GM10248 (cell line): ENCODE measurements at regions of chr6 and their contacts with region 1.

Region 1: GRCh38 chr6:70221025-70221714 is 81.7 kb downstream of the COL9A1 start:
- DNase-seq: peak; percentile 43
- CTCF ChIP-seq: peak; percentile 52

Region 2: DNA sequence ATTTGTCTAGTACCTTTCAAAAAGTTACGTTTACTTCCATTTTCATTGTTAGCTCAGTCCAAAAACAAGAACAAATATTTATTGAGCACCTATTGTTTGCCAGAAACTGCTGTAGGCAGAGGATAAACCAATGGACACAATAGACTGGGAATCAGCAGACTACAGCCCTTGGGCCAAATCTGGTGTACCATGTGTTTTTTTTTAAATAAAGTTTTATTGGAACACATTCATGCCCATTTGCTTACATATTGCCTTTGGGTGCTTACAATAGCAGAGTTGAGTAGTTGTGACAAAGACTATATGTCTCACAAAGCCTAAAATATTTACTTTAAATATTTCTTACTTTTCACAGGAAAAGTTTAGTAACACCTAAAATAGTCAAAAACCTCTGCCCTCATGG is 134.4 kb before region 1 on chr6:
- CTCF ChIA-PET with region 1: no interaction called
- POLR2A ChIA-PET with region 1: no interaction called
- DNase-seq: no peak
- CTCF ChIP-seq: no peak

Region 3: GRCh38 chr6:70210462-70210861 is 10.7 kb before region 1 on chr6:
- CTCF ChIA-PET with region 1: interaction called, 40 read pairs
- POLR2A ChIA-PET with region 1: no interaction called
- DNase-seq: peak; percentile 14
- CTCF ChIP-seq: peak; percentile 22

Region 4: DNA sequence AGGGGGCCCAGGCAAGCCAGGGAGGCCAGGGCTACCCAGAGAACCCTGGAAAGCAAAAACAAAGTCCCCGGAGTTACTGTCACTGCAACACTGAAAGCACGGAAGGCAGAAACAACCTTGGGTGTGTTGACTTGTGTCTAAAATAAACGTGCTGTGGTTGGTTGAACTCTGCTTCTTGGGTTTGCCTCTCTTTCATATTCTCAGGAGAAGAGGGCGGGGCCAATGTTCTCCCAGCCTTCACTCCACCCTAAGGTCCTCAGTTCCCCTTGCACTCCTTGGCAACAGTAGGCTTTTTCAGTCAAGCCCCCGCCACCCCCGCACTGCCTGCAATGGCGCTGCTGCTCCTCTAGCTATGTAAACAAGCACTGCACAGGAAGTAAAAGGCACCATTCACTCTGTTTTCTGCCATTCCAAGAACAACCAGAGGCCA is 20.8 kb after region 1 on chr6:
- CTCF ChIA-PET with region 1: interaction called, 16 read pairs
- POLR2A ChIA-PET with region 1: no interaction called
- DNase-seq: no peak
- CTCF ChIP-seq: no peak

Region 5: GRCh38 chr6:70282312-70282918 is 61.2 kb after region 1 on chr6:
- CTCF ChIA-PET with region 1: no interaction called
- POLR2A ChIA-PET with region 1: no interaction called
- DNase-seq: peak; percentile 9
- CTCF ChIP-seq: no peak

Region 6: DNA sequence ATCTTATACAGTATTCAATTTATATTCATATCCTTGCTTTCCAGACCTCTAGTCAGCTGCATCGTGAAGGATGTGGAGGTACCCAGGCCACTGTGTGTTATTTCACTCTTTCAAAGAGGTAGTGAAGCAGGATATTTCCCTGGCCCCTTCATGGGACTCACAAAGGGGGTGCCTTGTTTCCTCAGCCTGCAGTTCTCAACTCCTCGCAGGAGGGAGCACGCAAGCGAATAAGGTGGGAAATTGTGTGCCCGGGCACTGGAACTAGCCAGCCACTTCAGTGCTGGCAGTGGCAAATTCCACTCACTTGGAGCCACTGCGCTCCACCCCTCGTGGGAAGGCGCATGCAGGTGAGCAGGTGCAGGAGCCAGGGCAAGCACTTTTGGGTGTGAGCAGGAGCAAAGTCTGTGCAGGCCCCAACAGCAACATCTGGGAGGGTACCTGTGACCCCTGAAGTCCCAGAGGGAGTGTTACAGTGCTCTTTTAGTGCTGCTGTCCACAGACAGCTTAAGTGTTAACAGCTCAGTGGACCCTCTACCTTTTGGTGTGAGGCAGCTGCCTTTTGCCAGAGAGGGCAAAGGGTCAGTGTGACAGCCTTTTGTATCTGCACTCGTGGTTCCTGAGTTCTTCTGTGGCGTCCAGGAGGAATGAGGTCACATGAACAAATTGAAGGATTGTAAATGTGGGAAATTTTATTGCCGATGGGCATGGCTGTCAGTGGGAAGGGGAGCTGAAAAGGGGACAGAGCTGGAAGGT is 142.7 kb after region 1 on chr6:
- CTCF ChIA-PET with region 1: interaction called, 54 read pairs
- POLR2A ChIA-PET with region 1: no interaction called
- DNase-seq: no peak
- CTCF ChIP-seq: no peak

Region 7: DNA sequence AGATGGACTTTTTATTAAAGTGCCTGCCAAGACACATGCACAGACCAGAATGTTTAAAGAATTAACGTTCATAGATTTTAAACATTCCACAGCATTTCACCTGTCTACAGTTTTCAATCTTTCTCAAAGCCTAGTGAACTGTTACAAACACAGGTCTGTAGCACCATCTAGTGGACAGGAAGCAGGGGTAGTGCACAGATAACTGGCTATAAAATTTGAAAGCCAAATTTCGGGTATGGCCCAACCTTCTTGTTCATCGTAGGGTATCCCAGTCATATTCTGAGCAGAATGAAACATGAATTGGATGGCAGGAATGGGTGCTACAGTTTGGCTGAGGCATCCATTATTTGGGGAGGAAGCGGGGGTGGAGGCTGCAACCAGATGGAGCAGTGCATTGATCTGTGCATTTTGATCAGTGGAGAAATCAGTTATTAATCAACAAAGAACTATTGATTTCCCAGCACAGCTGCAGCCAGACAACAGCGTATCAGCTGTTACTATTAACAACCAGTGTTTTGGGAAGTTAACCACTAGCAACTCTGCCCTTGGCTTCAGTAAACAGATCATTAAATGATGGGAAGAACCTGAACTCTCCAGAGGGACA is 791.8 kb after region 1 on chr6:
- CTCF ChIA-PET with region 1: interaction called, 12 read pairs
- POLR2A ChIA-PET with region 1: no interaction called
- DNase-seq: peak; percentile 56
- CTCF ChIP-seq: peak; percentile 85